ENCODE measurements at regions of chr14 and their contacts with region 1.

Region 1: DNA sequence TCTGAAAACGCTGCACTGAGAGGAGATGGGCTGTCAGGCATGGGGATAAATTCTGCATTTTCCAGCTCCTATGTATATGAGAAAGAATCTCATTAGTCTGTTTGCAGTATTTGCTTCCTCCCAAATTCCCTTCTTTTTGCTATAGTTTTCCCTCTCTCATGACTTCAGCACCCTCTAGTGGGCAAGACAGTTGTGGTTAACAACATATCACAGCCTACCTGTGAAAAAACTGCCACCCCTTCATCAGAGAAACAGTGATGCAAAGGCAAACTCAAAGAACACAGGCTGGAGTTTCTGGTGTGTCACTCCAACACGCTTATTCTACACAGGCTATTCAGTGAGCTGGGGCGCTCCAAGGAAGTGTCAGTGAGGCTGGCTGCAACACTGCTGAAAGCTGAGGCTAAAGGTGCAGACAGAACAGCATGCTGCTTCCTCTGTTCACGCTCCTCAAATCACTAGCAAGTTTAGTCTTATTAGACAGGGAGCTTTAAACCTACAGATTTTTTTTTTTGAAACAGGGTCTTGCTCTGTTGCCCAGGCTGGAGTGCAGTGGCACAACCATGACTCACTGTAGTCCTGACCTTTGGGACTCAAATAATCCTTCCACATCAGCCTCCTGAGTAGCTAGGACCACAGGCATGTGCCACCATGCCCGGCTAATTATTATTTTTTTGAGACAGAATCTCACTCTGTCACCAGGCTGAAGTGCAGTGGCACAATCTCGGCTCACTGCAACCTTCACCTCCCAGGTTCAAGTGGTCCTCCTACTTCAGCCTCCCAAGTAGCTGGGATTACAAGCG is 19.3 kb downstream of the ZC2HC1C start:
- DNase-seq: no peak
- ATAC-seq: peak; percentile 84

Region 2: DNA sequence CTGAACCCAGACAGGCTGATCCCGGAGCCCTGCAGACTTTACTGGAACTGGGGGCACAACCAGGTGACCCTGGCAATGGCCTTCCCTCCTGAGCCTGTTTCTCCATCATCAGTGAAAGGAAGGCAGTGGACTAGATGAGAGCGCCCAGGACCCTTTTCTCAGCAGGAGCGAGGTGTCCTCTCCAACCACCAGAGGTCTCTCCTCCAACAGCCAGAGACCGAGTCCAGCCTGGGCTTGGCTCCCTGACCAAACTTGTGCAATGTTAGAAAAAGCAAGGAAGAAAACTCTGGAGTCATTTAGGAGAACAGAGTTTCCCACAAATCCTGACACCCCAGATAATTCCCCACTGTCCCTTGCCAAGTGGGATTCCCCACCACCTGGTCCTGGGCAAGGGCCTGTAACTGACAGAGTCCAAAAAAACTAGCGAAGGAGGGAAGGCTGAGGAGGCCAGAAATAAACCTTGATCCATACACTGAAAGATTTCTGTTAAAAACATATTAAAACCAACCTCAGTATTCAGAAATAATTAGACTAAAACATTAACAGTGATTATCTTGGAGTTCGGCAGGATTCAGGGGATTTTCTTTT is 174.7 kb before region 1 on chr14:
- intact Hi-C with region 1: loop called (anchors 10 kb)
- DNase-seq: peak; percentile 86
- ATAC-seq: peak; percentile 83

Region 3: GRCh38 chr14:74945823-74946682 is 142.7 kb before region 1 on chr14:
- intact Hi-C with region 1: loop called (anchors 10 kb)
- DNase-seq: peak; percentile 90
- ATAC-seq: peak; percentile 89